H1 (cell line): ENCODE measurements at regions of chr13 and their contacts with region 1.

Region 1: GRCh38 chr13:42328672-42329071 is 56.7 kb downstream of the AKAP11 start:
- DNase-seq: no peak
- H3K4me3 ChIP-seq: no peak overlapping the region
- H3K27ac ChIP-seq: no peak overlapping the region
- H3K4me1 ChIP-seq: peaks cover 0 to under 1% (median 0%) of the 10 kb centered on the region in 4 experiments; a peak in 1 of 7 replicates
- H3K27me3 ChIP-seq: no peaks in the 10 kb centered on the region
- CTCF ChIP-seq: no peak
- EP300 ChIP-seq: no peak
- POLR2A ChIP-seq: no peak
- RAD21 ChIP-seq: no peak

Region 2: GRCh38 chr13:42318570-42318969 is 10.1 kb before region 1 on chr13:
- CTCF ChIA-PET with region 1: interaction called, 15 read pairs
- POLR2A ChIA-PET with region 1: interaction called, 3 read pairs
- DNase-seq: no peak
- H3K4me3 ChIP-seq: no peak overlapping the region
- H3K27ac ChIP-seq: no peak overlapping the region
- H3K4me1 ChIP-seq: peaks cover 0 to 8% (median 3%) of the 10 kb centered on the region in 4 experiments; a peak in 3 of 7 replicates
- H3K27me3 ChIP-seq: no peaks in the 10 kb centered on the region
- CTCF ChIP-seq: no peak
- EP300 ChIP-seq: no peak
- POLR2A ChIP-seq: no peak
- RAD21 ChIP-seq: no peak

Region 3: GRCh38 chr13:42396501-42396900 is 67.8 kb after region 1 on chr13:
- CTCF ChIA-PET with region 1: no interaction called
- POLR2A ChIA-PET with region 1: no interaction called
- DNase-seq: no peak
- H3K4me3 ChIP-seq: no peak overlapping the region
- H3K27ac ChIP-seq: no peak overlapping the region
- H3K4me1 ChIP-seq: no peaks in the 10 kb centered on the region
- H3K27me3 ChIP-seq: no peaks in the 10 kb centered on the region
- CTCF ChIP-seq: no peak
- EP300 ChIP-seq: no peak
- POLR2A ChIP-seq: no peak
- RAD21 ChIP-seq: no peak